ENCODE measurements at regions of chr5 and their contacts with region 1.

Region 1: GRCh38 chr5:133423618-133424282 is 188.6 kb downstream of the FSTL4 start:
- DNase-seq: peak; percentile 83
- ATAC-seq: peak; percentile 77

Region 2: GRCh38 chr5:133610489-133611356 is 187.0 kb after region 1 on chr5:
- intact Hi-C with region 1: loop called (anchors 2 kb)
- DNase-seq: peak; percentile 78
- ATAC-seq: peak; percentile 94

Measured in Right ventricle myocardium inferior (tissue), 1 donor.